Endothelial cell of umbilical vein (primary cell): ENCODE measurements at regions of chr7 and their contacts with region 1.

Region 1: GRCh38 chr7:121547544-121548092 is 151.5 kb upstream of the FAM3C start:
- DNase-seq: peak; percentile 67
- H3K4me3 ChIP-seq: no peak overlapping the region
- H3K27ac ChIP-seq: no peak overlapping the region
- H3K4me1 ChIP-seq: peaks cover 32% of the 10 kb centered on the region
- H3K27me3 ChIP-seq: no peaks in the 10 kb centered on the region
- CTCF ChIP-seq: peak; percentile 43 to 50
- POLR2A ChIP-seq: no peak

Region 2: GRCh38 chr7:120805636-120806388 is 741.8 kb before region 1 on chr7:
- CTCF ChIA-PET with region 1: no interaction called
- POLR2A ChIA-PET with region 1: no interaction called
- dilution Hi-C with region 1: no loop called
- intact Hi-C with region 1: loop called (anchors 10 kb)
- DNase-seq: peak; percentile 80
- H3K4me3 ChIP-seq: no peak overlapping the region
- H3K27ac ChIP-seq: no peak overlapping the region
- H3K4me1 ChIP-seq: peaks cover 12% of the 10 kb centered on the region
- H3K27me3 ChIP-seq: no peaks in the 10 kb centered on the region
- CTCF ChIP-seq: peak; percentile 67 to 77
- POLR2A ChIP-seq: no peak

Region 3: GRCh38 chr7:120987683-120988590 is 559.7 kb before region 1 on chr7:
- CTCF ChIA-PET with region 1: no interaction called
- POLR2A ChIA-PET with region 1: no interaction called
- dilution Hi-C with region 1: no loop called
- intact Hi-C with region 1: loop called (anchors 5 kb)
- DNase-seq: peak; percentile 89
- H3K4me3 ChIP-seq: peak overlapping the region; percentile 39 to 80 (median 64)
- H3K27ac ChIP-seq: no peak overlapping the region
- H3K4me1 ChIP-seq: peaks cover 10% of the 10 kb centered on the region
- H3K27me3 ChIP-seq: peaks cover 0 to 9% of the 10 kb centered on the region in 2 experiments
- CTCF ChIP-seq: peak; percentile 95 to 97
- POLR2A ChIP-seq: no peak

Region 4: GRCh38 chr7:121126801-121127534 is 420.6 kb before region 1 on chr7:
- CTCF ChIA-PET with region 1: interaction called, 5 read pairs
- POLR2A ChIA-PET with region 1: no interaction called
- dilution Hi-C with region 1: no loop called
- intact Hi-C with region 1: loop called (anchors 1 kb)
- DNase-seq: peak; percentile 38
- H3K4me3 ChIP-seq: no peak overlapping the region
- H3K27ac ChIP-seq: no peak overlapping the region
- H3K4me1 ChIP-seq: no peaks in the 10 kb centered on the region
- H3K27me3 ChIP-seq: no peaks in the 10 kb centered on the region
- CTCF ChIP-seq: no peak
- POLR2A ChIP-seq: no peak

Region 5: DNA sequence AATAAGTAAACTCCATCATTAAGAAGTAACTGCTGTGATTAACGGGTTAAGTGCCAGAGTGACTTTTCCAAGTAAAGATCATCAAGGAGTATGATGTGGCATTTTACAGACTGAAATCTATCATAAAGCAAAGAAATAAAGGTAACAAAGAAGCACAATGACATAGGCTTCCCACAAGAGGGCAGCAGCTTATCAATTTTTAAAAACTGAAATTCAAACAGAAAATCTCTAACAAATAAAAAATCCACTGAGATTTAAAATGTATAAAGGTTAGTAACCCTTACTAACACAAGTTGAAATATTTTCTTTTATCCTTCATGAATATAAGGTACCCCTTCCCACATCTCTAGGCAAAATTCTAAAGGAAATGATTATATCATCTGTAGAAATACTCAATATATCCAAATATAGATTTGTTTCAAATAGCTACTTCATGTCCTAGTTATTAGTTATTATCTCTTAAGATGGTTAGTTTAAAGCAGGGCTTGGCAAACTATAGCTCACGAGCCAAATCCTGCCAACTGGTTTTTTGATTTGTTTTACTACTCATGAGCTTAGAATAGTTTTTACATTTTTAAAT is 180.7 kb before region 1 on chr7:
- CTCF ChIA-PET with region 1: interaction called, 293 read pairs
- POLR2A ChIA-PET with region 1: interaction called, 4 read pairs
- dilution Hi-C with region 1: no loop called
- intact Hi-C with region 1: loop called (anchors 1 kb)
- DNase-seq: peak; percentile 58
- H3K4me3 ChIP-seq: no peak overlapping the region
- H3K27ac ChIP-seq: no peak overlapping the region
- H3K4me1 ChIP-seq: peaks cover under 1% of the 10 kb centered on the region
- H3K27me3 ChIP-seq: no peaks in the 10 kb centered on the region
- CTCF ChIP-seq: peak; percentile 35 to 40
- POLR2A ChIP-seq: no peak

Region 6: DNA sequence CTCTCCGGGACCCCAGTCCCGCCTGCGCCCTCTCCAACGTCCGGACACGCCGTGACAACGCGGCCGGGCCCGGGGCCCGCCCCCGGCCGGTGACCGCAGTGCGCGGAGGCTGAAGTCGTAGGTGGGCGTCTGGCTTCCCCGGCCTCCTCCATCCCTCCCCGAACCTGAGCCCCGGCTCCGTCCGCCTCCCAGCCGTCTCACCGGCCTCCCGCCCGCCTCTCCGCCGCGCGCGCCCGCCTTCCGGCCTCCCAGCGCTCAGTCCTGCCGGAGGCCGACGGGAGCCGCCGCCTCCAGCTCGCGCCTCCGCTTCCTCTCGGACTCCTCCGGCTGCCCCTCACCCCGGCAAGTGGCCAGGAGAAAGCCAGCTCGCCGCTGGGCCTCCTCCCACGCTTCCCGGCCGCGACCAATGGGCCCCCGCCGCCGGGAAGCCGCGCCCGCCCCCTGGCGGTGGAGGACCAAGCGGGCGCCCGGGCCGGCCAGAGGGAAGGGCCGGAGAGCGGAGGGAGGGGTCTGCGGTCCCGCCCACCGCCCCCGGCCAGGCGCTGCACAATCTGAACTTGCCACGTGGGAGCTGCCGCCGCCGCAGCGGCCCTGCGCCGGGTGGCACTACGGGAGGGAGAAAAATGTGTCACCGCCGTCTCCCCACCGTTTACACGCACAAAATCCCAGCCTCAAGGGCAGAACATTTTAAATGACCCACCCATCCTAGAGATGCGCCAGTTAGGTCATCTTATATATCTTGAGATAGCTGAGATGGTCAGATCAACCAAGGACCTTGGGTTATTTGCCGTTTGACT is 151.5 kb before region 1 on chr7 and contains the start of gene FAM3C:
- CTCF ChIA-PET with region 1: interaction called, 30 read pairs
- POLR2A ChIA-PET with region 1: no interaction called
- dilution Hi-C with region 1: no loop called
- intact Hi-C with region 1: loop called (anchors 1 kb)
- DNase-seq: peak; percentile 96
- H3K4me3 ChIP-seq: peak within 1 kb of the TSS; percentile 73 to 100 (median 99)
- H3K27ac ChIP-seq: peak within 1 kb of the TSS; percentile 87
- H3K4me1 ChIP-seq: peaks cover 16% of the 10 kb centered on the region
- H3K27me3 ChIP-seq: no peaks in the 10 kb centered on the region
- CTCF ChIP-seq: peak; percentile 75 to 96
- POLR2A ChIP-seq: peak; percentile 51
- total RNA-seq, gene FAM3C: 50.0 and 54.5 TPM in 2 replicates

Region 7: DNA sequence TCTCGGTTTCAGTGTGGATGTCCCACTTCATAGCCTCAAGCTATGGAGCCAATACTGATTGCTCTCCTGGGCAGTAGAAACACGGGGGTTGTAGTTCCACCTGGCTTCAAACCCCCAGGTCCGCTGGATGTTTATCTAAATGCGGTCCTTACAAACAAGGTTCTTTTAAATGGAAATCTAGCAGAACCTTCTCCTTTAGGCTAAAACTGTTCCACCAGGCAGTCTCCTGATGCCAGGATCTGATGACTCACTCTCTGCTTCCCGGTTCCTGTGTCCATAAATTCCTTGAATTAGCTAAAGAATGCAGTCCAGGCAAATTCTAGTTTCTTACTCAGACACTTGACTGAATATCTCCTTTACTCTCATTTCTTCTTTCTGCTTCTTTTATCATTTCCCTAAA is 43.1 kb before region 1 on chr7:
- CTCF ChIA-PET with region 1: no interaction called
- POLR2A ChIA-PET with region 1: no interaction called
- dilution Hi-C with region 1: no loop called
- intact Hi-C with region 1: loop called (anchors 1 kb)
- DNase-seq: peak; percentile 83
- H3K4me3 ChIP-seq: peak overlapping the region in 1 of 3 experiments; percentile 8
- H3K27ac ChIP-seq: peak overlapping the region; percentile 86
- H3K4me1 ChIP-seq: peaks cover 9% of the 10 kb centered on the region
- H3K27me3 ChIP-seq: no peaks in the 10 kb centered on the region
- CTCF ChIP-seq: no peak
- POLR2A ChIP-seq: no peak